Activated naive CD4-positive, alpha-beta T cell treated with anti-CD3 and anti-CD28 coated beads for 36 hours (primary cell): ENCODE measurements at regions of chr13 and their contacts with region 1.

Region 1: DNA sequence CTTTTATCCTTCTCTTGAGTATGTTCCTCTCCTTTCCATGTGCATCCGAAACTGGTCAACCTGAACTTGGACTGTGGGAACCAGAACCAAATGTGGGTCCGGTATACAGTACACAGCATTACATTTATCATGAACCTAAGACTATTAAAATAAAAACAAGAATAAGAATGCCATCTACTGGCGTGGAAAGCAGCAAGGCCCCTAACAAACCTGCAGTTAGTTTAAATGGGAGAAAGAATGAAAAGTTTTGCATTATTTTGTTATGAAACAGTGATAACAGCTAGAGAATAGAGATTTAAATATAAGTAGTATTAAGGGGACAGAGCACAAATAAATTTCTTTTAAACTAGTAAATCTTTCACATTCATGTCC is 159.5 kb downstream of the RBM26 start:
- DNase-seq: no peak
- H3K4me3 Mint-ChIP-seq: no peak overlapping the region
- H3K27ac Mint-ChIP-seq: no peak overlapping the region
- H3K4me1 Mint-ChIP-seq: no peaks in the 10 kb centered on the region
- H3K27me3 Mint-ChIP-seq: peaks cover 3% of the 10 kb centered on the region

Region 2: DNA sequence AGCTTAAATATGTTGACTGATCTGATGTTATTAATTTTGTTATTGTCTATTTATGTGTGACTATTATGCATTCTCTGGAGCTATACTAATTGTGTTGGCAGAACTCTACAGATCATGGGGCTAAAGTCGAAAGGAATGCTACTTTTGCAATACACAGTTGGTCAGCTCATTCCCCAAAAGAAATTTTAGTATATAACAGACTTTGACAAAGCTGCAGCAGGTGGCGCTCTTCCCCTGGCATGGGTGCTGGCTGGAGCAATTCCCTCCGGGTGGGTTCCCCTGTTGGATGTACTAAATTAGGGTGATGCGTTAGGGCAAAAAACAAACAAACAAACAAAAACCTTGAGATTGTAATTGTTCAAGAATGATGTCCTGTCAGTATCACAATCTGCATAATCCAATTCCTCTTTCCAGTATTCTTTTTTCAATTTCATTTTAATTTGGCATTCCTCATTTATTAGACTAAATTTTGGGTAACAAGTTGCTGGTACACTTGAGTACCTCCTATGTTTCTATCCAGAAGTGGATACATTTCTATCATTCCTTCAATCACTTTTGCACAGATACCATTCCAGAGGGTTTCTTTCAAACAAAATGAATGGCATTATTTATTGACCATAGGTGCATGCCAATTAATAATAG is 1005.2 kb before region 1 on chr13:
- CTCF ChIA-PET with region 1: no interaction called
- intact Hi-C with region 1: loop called (anchors 5 kb)
- DNase-seq: peak; percentile 45
- H3K4me3 Mint-ChIP-seq: no peak overlapping the region
- H3K27ac Mint-ChIP-seq: no peak overlapping the region
- H3K4me1 Mint-ChIP-seq: no peaks in the 10 kb centered on the region
- H3K27me3 Mint-ChIP-seq: no peaks in the 10 kb centered on the region

Region 3: GRCh38 chr13:79141082-79141481 is 105.5 kb before region 1 on chr13:
- CTCF ChIA-PET with region 1: no interaction called
- intact Hi-C with region 1: no loop called
- DNase-seq: no peak
- H3K4me3 Mint-ChIP-seq: no peak overlapping the region
- H3K27ac Mint-ChIP-seq: no peak overlapping the region
- H3K4me1 Mint-ChIP-seq: no peaks in the 10 kb centered on the region
- H3K27me3 Mint-ChIP-seq: peaks cover 2% of the 10 kb centered on the region

Region 4: DNA sequence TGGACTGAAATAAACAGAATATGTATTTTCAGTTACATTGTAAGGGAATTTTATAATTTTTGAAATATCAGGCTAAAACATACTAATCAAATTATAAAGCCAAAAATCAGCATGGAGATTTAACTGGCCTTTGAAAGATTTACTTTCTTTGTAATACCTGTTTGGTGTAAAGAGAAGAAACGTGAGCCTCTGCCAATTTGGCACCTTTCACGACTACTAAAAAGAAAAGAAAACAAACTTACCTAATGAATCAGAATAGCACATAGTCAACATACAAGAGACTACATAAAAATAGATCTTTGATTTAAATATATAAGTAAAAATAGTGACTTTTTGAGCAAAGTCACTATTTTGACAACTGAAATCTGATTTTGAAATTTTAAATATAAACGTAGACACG is 72.1 kb after region 1 on chr13:
- CTCF ChIA-PET with region 1: no interaction called
- intact Hi-C with region 1: no loop called
- DNase-seq: no peak
- H3K4me3 Mint-ChIP-seq: no peak overlapping the region
- H3K27ac Mint-ChIP-seq: no peak overlapping the region
- H3K4me1 Mint-ChIP-seq: peaks cover 15% of the 10 kb centered on the region
- H3K27me3 Mint-ChIP-seq: no peaks in the 10 kb centered on the region